ENCODE measurements at regions of chr12 and their contacts with region 1.

Region 1: GRCh38 chr12:91355150-91356006 is 172.8 kb upstream of the DCN start:
- DNase-seq: peak in 8 of 9 experiments; percentile 4 to 63 (median 38)
- ATAC-seq: peak; percentile 82
- H3K4me3 ChIP-seq: no peak overlapping the region
- H3K4me3 Mint-ChIP-seq: no peak overlapping the region
- H3K27ac ChIP-seq: no peak overlapping the region
- H3K27ac Mint-ChIP-seq: no peak overlapping the region
- H3K4me1 ChIP-seq: no peaks in the 10 kb centered on the region
- H3K4me1 Mint-ChIP-seq: no peaks in the 10 kb centered on the region
- H3K27me3 ChIP-seq: no peaks in the 10 kb centered on the region
- H3K27me3 Mint-ChIP-seq: peaks cover 15% of the 10 kb centered on the region
- CTCF ChIP-seq: peak; percentile 58

Region 2: GRCh38 chr12:91367234-91367849 is 12.0 kb after region 1 on chr12:
- CTCF ChIA-PET with region 1: interaction called, 16 read pairs
- POLR2A ChIA-PET with region 1: no interaction called
- intact Hi-C with region 1: no loop called
- DNase-seq: peak in 1 of 9 experiments; percentile 9
- ATAC-seq: no peak
- H3K4me3 ChIP-seq: no peak overlapping the region
- H3K4me3 Mint-ChIP-seq: no peak overlapping the region
- H3K27ac ChIP-seq: no peak overlapping the region
- H3K27ac Mint-ChIP-seq: no peak overlapping the region
- H3K4me1 ChIP-seq: no peaks in the 10 kb centered on the region
- H3K4me1 Mint-ChIP-seq: no peaks in the 10 kb centered on the region
- H3K27me3 ChIP-seq: no peaks in the 10 kb centered on the region
- H3K27me3 Mint-ChIP-seq: peaks cover 2% of the 10 kb centered on the region
- CTCF ChIP-seq: peak; percentile 49